A673 (cell line): ENCODE measurements at regions of chr14 and their contacts with region 1.

Region 1: DNA sequence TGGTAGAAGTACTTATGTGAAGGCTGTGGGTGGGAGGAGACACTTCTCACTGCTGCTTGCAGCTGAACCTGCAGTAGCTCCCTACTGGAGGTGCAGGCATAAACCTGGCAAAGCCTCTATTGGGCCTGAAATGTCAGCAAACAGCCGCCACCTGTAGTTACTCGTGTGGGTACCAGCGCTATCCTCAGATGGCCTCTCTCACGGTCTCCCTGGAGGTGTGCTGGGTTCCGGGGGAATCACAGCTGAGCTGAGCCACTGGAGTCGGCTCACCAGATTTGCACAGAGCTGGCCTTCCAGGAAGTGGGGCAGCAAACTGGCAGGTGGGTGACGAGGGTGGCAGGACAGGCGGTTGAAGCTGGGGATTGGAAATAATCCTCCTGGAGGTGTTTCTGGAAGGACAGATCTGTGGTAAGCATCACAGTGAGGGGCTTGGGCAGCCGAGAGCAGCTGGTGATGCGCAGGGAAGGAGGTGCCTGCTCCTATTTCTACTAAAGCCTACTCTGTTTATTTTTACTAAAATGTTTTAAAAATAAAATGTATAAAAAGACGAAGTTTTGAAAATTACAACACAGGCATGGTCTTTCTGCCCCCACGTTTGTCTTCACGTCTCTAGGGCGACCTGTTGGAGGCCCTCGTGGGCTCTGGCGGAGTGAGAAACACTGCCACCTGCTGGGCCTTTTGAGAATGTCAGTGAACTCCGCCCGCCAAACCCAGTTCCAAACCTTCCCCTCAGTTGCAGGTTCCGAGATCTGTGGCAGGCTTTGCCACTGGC is 67.8 kb upstream of the PLEKHG3 start:
- DNase-seq: peak; percentile 85
- H3K4me3 ChIP-seq: no peak overlapping the region
- H3K27ac ChIP-seq: peak overlapping the region; percentile 90
- H3K4me1 ChIP-seq: peaks cover 30% of the 10 kb centered on the region
- H3K27me3 ChIP-seq: no peaks in the 10 kb centered on the region
- CTCF ChIP-seq: peak; percentile 94

Region 2: GRCh38 chr14:64338616-64339316 is 297.6 kb before region 1 on chr14:
- CTCF ChIA-PET with region 1: no interaction called
- POLR2A ChIA-PET with region 1: no interaction called
- intact Hi-C with region 1: loop called (anchors 5 kb)
- DNase-seq: peak; percentile 99
- H3K4me3 ChIP-seq: peak overlapping the region; percentile 79
- H3K27ac ChIP-seq: peak overlapping the region; percentile 94
- H3K4me1 ChIP-seq: peaks cover 10% of the 10 kb centered on the region
- H3K27me3 ChIP-seq: no peaks in the 10 kb centered on the region
- CTCF ChIP-seq: no peak

Region 3: DNA sequence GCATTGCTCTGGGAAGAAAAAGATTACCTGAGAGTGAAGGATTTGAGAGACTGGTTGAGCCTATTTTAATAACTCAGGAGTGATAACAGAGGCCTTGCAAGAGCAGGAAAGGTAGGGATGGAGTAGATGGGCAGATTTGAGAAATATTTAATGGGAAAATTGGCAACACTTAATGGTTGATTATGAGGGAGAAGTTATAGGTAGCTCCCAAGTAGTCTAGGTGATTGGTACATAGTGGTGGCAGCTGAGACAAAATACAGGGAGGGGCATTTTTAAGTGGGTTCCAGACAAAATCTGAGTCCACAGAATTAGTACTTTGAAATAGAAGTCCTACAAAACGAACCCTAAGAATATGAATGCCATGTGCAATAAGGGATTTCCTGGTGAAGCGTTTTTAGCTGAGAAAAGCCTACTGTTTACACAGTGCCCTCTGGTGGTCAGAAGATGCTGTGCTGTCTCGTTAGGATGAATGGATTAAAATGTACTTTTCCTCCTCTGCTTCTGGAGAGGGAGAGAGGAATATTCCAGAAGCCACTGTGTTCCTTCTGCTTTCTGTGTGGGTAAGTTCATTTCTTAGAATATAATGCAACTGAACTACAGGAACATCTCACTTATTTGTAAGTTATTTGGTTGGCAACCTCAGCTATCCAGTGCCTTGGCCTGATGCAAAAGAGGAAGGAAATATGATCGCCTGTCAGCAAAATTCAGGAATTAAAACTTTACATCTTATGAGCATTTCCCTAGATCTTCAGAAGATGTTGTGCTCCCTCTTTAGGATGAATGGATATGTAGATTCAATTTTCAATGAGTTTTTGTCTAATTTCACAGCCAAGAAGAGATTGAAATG is 125.3 kb before region 1 on chr14:
- CTCF ChIA-PET with region 1: no interaction called
- POLR2A ChIA-PET with region 1: no interaction called
- intact Hi-C with region 1: loop called (anchors 5 kb)
- DNase-seq: peak; percentile 84
- H3K4me3 ChIP-seq: no peak overlapping the region
- H3K27ac ChIP-seq: peak overlapping the region; percentile 13
- H3K4me1 ChIP-seq: peaks cover 34% of the 10 kb centered on the region
- H3K27me3 ChIP-seq: no peaks in the 10 kb centered on the region
- CTCF ChIP-seq: peak; percentile 95

Region 4: GRCh38 chr14:64540208-64541157 is 95.9 kb before region 1 on chr14 and contains the start of gene HSPA2:
- CTCF ChIA-PET with region 1: interaction called, 4 read pairs
- POLR2A ChIA-PET with region 1: interaction called, 3 read pairs
- intact Hi-C with region 1: loop called (anchors 2 kb)
- DNase-seq: peak; percentile 99
- H3K4me3 ChIP-seq: peak within 1 kb of the TSS; percentile 59
- H3K27ac ChIP-seq: peak within 1 kb of the TSS; percentile 76
- H3K4me1 ChIP-seq: no peaks in the 10 kb centered on the region
- H3K27me3 ChIP-seq: no peaks in the 10 kb centered on the region
- CTCF ChIP-seq: peak; percentile 86
- total RNA-seq, gene HSPA2: 13.8 and 14.3 TPM in 2 replicates

Region 5: GRCh38 chr14:64623554-64624165 is 12.7 kb before region 1 on chr14:
- CTCF ChIA-PET with region 1: interaction called, 4 read pairs
- POLR2A ChIA-PET with region 1: interaction called, 35 read pairs
- intact Hi-C with region 1: no loop called
- DNase-seq: no peak
- H3K4me3 ChIP-seq: no peak overlapping the region
- H3K27ac ChIP-seq: no peak overlapping the region
- H3K4me1 ChIP-seq: no peaks in the 10 kb centered on the region
- H3K27me3 ChIP-seq: no peaks in the 10 kb centered on the region
- CTCF ChIP-seq: no peak

Region 6: DNA sequence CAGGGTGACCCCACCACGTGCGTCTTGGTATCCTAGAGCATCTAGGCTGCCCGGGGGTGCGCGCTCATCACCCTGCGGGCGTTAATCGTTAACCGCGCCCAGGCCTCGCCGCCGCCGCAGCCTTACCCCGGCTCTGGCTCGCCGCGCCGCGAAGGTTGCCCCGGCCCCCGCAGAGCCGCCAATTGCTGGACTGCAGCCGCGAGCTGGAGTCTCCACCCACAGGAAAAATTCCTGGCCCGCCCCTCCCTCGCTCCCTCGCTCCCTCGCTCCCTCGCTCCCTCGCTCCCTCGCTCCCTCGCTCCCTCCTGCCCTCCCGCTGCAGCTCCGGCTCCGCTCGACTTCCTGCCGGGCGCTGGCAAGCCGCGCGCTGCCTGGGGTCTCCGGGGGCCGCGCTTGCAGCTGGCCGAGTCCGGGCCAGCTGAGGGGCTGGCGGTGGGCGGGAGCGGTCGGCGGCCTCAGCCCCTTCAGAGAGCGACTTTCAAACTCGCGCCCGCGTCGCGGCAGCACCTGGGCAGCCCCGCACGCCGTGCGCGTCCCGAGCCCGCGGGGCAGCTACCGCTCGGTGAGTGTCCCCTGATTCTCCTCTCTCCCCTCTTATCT is 67.8 kb after region 1 on chr14 and contains the start of gene PLEKHG3:
- CTCF ChIA-PET with region 1: no interaction called
- POLR2A ChIA-PET with region 1: no interaction called
- intact Hi-C with region 1: no loop called
- DNase-seq: peak; percentile 82
- H3K4me3 ChIP-seq: peak within 1 kb of the TSS; percentile 70
- H3K27ac ChIP-seq: peak within 1 kb of the TSS; percentile 76
- H3K4me1 ChIP-seq: peaks cover 18% of the 10 kb centered on the region
- H3K27me3 ChIP-seq: no peaks in the 10 kb centered on the region
- CTCF ChIP-seq: no peak
- total RNA-seq, gene PLEKHG3: 29.6 and 39.4 TPM in 2 replicates